ENCODE measurements at regions of chr6 and their contacts with region 1.

Region 1: DNA sequence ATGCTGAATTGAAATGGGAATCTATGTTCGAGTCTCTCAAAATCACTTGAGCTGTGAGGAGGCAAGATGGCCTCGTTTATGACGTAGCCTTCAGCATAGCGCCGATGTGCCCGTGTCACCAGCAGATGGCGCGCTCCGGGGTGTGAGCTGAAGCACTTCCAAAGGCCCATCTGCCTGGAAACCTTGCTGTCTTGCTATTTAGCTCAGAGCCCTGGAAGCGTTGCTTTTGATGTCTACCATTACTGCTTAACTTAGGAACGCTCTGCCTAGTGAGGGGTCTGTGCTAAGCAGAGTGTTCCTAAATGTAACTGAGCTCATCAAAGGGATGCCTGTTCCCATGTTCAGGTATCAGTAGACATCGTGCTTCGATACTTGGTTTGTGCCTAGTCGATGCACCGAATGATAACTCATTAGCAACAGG is 67.7 kb downstream of the SYCP2L start:
- DNase-seq: peak; percentile 72

Region 2: DNA sequence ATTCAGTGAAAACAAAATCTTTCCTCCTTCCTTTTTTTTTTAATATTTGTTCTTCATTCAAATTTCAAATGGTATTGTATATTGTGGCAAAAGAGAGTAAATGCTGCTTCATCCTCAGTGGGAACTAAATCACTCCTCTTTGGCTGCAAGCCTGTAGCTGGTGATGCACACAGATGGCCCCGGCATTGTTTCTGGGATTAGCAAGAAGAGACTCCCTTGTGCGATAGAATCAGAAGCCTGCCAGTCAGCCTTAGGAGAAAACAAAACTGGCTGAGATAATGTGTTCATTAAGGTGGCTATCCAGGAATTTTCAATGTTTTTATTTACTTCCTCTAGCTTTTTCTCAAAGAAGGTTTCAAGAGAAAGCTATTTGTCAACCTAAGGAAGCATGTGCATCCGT is 110.2 kb after region 1 on chr6:
- CTCF ChIA-PET with region 1: interaction called, 13 read pairs
- POLR2A ChIA-PET with region 1: no interaction called
- DNase-seq: no peak

Measured in HEK293T (cell line).